Transverse colon (tissue), 4 donors: ENCODE measurements at regions of chr17 and their contacts with region 1.

Region 1: GRCh38 chr17:50689956-50690886 is 17.5 kb downstream of the ANKRD40 start:
- DNase-seq: no peak
- H3K4me3 ChIP-seq: no peak overlapping the region
- H3K27ac ChIP-seq: peak overlapping the region; percentile 85 to 89 (median 88)
- H3K4me1 ChIP-seq: peaks cover 67 to 97% (median 80%) of the 10 kb centered on the region in 4 donors
- H3K27me3 ChIP-seq: no peaks in the 10 kb centered on the region
- CTCF ChIP-seq: no peak
- EP300 ChIP-seq: no peak
- POLR2A ChIP-seq: no peak

Region 2: DNA sequence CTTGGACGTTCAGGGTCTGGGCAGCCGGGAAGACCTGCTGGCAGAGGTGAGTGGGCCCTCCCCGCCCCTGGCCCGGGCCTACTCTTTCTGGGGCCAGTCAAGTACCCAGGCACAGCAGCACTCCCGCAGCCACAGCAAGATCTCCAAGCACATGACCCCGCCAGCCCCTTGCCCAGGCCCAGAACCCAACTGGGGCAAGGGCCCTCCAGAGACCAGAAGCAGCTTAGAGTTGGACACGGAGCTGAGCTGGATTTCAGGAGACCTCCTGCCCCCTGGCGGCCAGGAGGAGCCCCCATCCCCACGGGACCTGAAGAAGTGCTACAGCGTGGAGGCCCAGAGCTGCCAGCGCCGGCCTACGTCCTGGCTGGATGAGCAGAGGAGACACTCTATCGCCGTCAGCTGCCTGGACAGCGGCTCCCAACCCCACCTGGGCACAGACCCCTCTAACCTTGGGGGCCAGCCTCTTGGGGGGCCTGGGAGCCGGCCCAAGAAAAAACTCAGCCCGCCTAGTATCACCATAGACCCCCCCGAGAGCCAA is 64.1 kb before region 1 on chr17:
- in situ Hi-C with region 1: loop called in 1 of 4 experiments (anchors 10 kb)
- intact Hi-C with region 1: no loop called
- DNase-seq: peak; percentile 71
- H3K4me3 ChIP-seq: no peak overlapping the region
- H3K27ac ChIP-seq: no peak overlapping the region
- H3K4me1 ChIP-seq: peaks cover 3 to 39% (median 28%) of the 10 kb centered on the region in 4 donors
- H3K27me3 ChIP-seq: peaks cover 3% of the 10 kb centered on the region
- CTCF ChIP-seq: peak; percentile 46 to 73 (median 58)
- EP300 ChIP-seq: no peak
- POLR2A ChIP-seq: no peak

Region 3: DNA sequence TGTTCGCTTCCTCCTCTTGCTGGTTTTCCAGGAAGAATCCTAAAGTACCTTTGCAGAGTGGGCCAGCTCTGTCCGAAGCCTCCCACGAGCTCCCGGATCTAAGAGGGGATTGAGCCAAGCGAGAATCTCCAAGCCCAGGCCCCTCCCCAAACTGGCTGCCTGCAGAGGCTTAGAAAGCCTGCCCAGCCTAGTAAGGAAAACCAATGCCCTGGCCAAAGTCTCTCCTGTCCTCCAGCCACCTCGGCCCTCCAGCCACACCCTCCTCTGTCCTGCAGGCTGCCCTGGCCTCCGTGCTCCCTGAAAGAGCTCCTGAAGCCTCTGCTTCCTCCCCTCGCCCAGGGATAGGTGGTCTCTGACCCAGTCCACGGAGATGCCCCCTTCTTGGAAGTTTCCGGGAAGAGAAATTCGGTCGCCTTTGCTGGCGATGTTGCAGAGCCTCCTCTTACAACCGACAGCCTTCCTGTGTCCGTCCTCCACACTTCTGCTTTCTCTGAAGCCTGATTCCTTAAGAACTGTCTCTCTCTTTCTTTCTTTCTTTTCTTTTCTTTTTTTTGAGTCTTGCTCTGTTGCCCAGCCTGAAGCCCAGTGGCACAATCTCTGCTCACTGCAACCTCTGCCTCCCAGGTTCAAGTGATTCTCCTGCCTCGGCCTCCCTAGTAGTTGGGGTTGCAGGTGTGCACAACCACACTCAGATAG is 230.8 kb after region 1 on chr17:
- in situ Hi-C with region 1: no loop called
- intact Hi-C with region 1: no loop called
- DNase-seq: peak; percentile 60
- H3K4me3 ChIP-seq: no peak overlapping the region
- H3K27ac ChIP-seq: peak overlapping the region; percentile 81 to 93 (median 91)
- H3K4me1 ChIP-seq: peaks cover 24 to 81% (median 63%) of the 10 kb centered on the region in 4 donors
- H3K27me3 ChIP-seq: no peaks in the 10 kb centered on the region
- CTCF ChIP-seq: no peak
- EP300 ChIP-seq: no peak
- POLR2A ChIP-seq: no peak

Region 4: DNA sequence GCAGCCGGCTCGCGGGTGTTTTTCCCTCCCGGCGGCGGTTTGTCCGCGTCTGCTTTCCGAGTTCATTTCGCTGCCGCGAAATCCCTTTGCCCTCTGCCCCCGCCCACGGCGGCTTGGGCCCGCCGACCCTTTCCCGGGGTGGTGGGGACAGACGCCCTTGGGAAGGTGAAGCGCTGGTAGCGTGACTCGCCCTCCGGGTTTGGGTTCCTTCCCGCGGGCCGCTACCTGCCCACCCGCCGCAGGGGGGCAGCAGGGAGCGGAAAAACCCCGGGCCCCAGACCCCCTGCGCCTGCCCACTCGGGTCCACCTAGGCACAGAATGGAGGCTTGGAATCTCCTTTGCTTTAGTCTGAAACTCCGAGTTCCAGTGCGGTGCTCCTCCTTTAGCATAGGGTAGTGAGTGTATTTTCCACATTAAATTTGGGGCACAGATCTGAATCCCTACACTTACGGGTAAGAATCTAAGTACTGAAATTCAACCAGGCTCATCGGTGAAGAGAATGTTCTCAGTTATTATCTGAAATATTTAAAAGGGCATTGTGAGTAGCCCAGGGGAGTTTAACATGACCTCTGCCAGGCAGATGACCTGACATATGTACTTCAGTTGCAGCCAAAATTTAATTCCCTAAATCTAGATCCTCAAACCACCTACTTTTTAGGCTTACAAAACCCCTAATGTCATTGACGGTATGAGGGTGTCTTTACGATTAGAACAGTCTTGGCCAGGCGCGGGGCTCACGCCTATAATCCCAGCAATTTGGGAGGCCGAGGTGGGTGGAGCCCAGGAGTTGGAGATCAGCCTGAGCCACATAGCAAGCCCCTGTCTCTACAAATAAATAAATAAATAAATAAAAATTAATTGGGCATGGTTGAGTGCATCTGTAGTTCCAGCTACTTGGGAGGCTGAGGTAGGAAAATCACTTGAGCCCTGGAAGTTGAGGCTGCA is 477.0 kb after region 1 on chr17:
- in situ Hi-C with region 1: no loop called
- intact Hi-C with region 1: no loop called
- DNase-seq: peak; percentile 64
- H3K4me3 ChIP-seq: peak overlapping the region; percentile 70 to 100 (median 92)
- H3K27ac ChIP-seq: peak overlapping the region; percentile 97 to 98 (median 98)
- H3K4me1 ChIP-seq: peaks cover 7 to 24% (median 17%) of the 10 kb centered on the region in 4 donors
- H3K27me3 ChIP-seq: no peaks in the 10 kb centered on the region
- CTCF ChIP-seq: peak; percentile 72 to 87 (median 74)
- EP300 ChIP-seq: no peak
- POLR2A ChIP-seq: no peak